GM10248 (cell line): ENCODE measurements at regions of chr6 and their contacts with region 1.

Region 1: DNA sequence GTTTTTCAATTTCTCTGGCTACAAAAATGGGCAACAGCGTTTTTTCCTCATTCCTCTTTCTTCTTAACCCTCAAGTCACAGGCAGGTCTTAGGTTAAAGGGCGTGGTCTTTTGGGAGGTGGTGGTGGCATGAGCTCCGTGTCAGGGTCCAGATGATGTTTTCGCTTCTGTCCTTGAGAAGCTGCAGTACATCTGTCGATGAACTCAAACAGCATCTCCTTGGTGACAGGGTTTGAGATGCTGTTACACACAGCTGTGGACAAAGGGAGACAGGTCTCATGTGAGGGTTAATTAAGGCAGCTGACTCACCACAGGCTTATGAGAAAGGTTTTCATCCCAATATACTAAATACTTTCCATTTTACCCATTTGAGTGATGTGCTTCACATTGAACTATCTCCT is 350.8 kb downstream of the RNGTT start:
- DNase-seq: no peak
- CTCF ChIP-seq: no peak

Region 2: GRCh38 chr6:88449770-88450169 is 162.9 kb before region 1 on chr6:
- CTCF ChIA-PET with region 1: no interaction called
- POLR2A ChIA-PET with region 1: no interaction called
- DNase-seq: no peak
- CTCF ChIP-seq: no peak

Region 3: DNA sequence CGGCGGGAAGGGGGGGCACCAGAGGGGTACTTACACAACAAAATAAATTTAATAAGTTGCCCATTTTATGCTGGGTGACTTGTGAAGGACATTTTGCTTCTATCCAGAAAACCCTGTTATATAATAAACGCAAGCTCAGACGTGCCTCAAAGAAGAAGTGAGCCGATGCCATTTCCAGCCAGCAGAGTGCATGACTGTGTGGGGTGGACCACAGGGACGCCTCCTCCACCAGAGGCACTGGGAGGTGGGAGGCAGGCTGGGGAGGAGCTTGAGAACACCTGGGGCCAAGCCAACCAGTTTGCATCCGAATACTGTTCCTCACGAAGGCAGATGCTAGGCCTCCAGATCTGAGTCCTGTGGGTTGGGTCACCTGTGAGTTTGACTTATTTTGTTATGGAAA is 13.1 kb before region 1 on chr6:
- CTCF ChIA-PET with region 1: interaction called, 17 read pairs
- POLR2A ChIA-PET with region 1: interaction called, 3 read pairs
- DNase-seq: peak; percentile 31
- CTCF ChIP-seq: no peak

Region 4: GRCh38 chr6:88695936-88696335 is 83.3 kb after region 1 on chr6:
- CTCF ChIA-PET with region 1: no interaction called
- POLR2A ChIA-PET with region 1: no interaction called
- DNase-seq: no peak
- CTCF ChIP-seq: no peak